ENCODE measurements at regions of chr4 and their contacts with region 1.

Region 1: GRCh38 chr4:56907489-56908205 is at the start of gene REST:
- DNase-seq: peak; percentile 52
- ATAC-seq: peak; percentile 75
- H3K4me3 ChIP-seq: peak within 1 kb of the TSS; percentile 76
- H3K27ac ChIP-seq: peak within 1 kb of the TSS; percentile 96
- H3K4me1 ChIP-seq: peaks cover 7% of the 10 kb centered on the region; the same call in 1 of the 2 replicates
- H3K27me3 ChIP-seq: peaks cover 9% of the 10 kb centered on the region
- CTCF ChIP-seq: no peak
- POLR2A ChIP-seq: no peak
- RAD21 ChIP-seq: no peak
- total RNA-seq, gene REST: 60.5 and 66.9 TPM in 2 replicates

Region 2: GRCh38 chr4:55409468-55410171 is 1498.0 kb before region 1 on chr4:
- CTCF ChIA-PET with region 1: no interaction called
- POLR2A ChIA-PET with region 1: no interaction called
- dilution Hi-C with region 1: no loop called
- in situ Hi-C with region 1: no loop called
- intact Hi-C with region 1: no loop called
- DNase-seq: peak; percentile 13
- ATAC-seq: peak; percentile 40; the same call in 1 of the 2 replicates
- H3K4me3 ChIP-seq: no peak overlapping the region
- H3K27ac ChIP-seq: peak overlapping the region; percentile 9; the same call in 1 of the 2 replicates
- H3K4me1 ChIP-seq: peaks cover 8% of the 10 kb centered on the region
- H3K27me3 ChIP-seq: no peaks in the 10 kb centered on the region
- CTCF ChIP-seq: peak; percentile 33; the same call in 1 of the 2 replicates
- POLR2A ChIP-seq: no peak
- RAD21 ChIP-seq: peak; percentile 43; the same call in 1 of the 2 replicates

Region 3: DNA sequence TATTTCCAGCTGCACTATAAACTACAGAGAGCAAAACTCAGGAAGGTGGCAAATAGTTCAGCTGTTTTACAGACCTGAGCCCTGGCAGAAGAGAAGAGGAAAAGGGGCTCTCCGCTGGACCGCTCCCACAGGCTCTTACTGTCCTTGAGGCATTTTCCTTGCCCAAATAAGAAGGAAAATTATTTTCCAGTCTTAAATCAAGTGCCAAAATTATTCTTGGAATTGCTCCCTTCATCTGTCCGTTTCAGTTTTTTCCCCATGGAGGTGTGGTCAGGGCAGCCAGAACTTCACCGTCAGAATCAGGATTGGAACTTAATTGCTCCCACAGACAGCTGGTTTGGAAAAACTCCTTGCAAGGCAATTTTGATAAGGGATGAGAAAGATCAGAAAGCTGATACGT is 51.0 kb before region 1 on chr4:
- CTCF ChIA-PET with region 1: no interaction called
- POLR2A ChIA-PET with region 1: interaction called, 13 read pairs
- dilution Hi-C with region 1: no loop called
- in situ Hi-C with region 1: no loop called
- intact Hi-C with region 1: no loop called
- DNase-seq: no peak
- ATAC-seq: no peak
- H3K4me3 ChIP-seq: no peak overlapping the region
- H3K27ac ChIP-seq: no peak overlapping the region
- H3K4me1 ChIP-seq: no peaks in the 10 kb centered on the region
- H3K27me3 ChIP-seq: peaks cover 6% of the 10 kb centered on the region
- CTCF ChIP-seq: no peak
- POLR2A ChIP-seq: no peak
- RAD21 ChIP-seq: no peak

Region 4: GRCh38 chr4:56940971-56941370 is 33.3 kb after region 1 on chr4:
- CTCF ChIA-PET with region 1: no interaction called
- POLR2A ChIA-PET with region 1: no interaction called
- dilution Hi-C with region 1: no loop called
- in situ Hi-C with region 1: no loop called
- intact Hi-C with region 1: no loop called
- DNase-seq: no peak
- ATAC-seq: no peak
- H3K4me3 ChIP-seq: no peak overlapping the region
- H3K27ac ChIP-seq: no peak overlapping the region
- H3K4me1 ChIP-seq: peaks cover 2% of the 10 kb centered on the region; the same call in 1 of the 2 replicates
- H3K27me3 ChIP-seq: no peaks in the 10 kb centered on the region
- CTCF ChIP-seq: no peak
- POLR2A ChIP-seq: no peak
- RAD21 ChIP-seq: no peak

Region 5: GRCh38 chr4:56958111-56958517 is 50.5 kb after region 1 on chr4:
- CTCF ChIA-PET with region 1: no interaction called
- POLR2A ChIA-PET with region 1: no interaction called
- dilution Hi-C with region 1: no loop called
- in situ Hi-C with region 1: no loop called
- intact Hi-C with region 1: loop called (anchors 2 kb)
- DNase-seq: peak; percentile 100
- ATAC-seq: peak; percentile 95
- H3K4me3 ChIP-seq: no peak overlapping the region
- H3K27ac ChIP-seq: no peak overlapping the region
- H3K4me1 ChIP-seq: 0 out of 2 replicates have a peak, but pooled peaks cover 2% of the 10 kb centered on the region
- H3K27me3 ChIP-seq: no peaks in the 10 kb centered on the region
- CTCF ChIP-seq: no peak
- POLR2A ChIP-seq: 0 out of 2 replicates have a peak, but pooled peaks have one; percentile 17
- RAD21 ChIP-seq: no peak

Region 6: DNA sequence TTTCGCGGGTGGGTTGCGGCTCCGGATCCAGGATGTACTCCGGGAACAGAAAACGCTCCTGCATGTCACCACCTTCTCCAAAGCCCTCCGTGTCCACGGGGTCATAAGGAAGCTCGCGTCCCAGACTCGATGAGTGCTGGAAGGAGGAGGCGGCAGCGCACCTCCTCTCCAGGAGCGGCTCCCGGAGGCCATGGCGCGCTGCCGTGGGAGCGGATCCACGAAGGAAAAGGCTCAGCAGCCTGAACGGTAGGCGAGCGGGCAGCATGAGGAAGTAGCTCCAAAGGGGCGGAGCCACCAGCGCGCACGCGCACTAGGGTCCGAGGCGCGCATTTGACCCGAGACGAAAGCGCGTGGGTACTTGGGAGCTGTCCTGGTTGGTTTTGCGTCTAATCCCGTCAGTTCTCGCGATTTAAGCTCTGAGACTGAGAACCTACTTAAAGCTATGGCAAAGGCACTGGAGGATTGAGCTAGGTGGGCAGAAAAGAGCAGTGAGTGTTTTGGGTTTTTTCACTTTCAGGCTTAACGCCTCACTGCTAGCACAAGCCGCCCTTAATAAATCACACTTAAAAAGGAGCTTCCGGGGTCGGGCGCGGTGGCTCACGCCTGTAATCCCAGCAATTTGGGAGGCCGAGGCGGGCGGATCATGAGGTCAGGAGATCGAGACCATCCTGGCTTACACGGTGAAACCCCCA is 69.8 kb after region 1 on chr4 and contains the start of gene NOA1:
- CTCF ChIA-PET with region 1: no interaction called
- POLR2A ChIA-PET with region 1: no interaction called
- dilution Hi-C with region 1: no loop called
- in situ Hi-C with region 1: no loop called
- intact Hi-C with region 1: loop called (anchors 2 kb)
- DNase-seq: peak; percentile 99
- ATAC-seq: peak; percentile 71
- H3K4me3 ChIP-seq: peak within 1 kb of the TSS; percentile 86
- H3K27ac ChIP-seq: peak within 1 kb of the TSS; percentile 89
- H3K4me1 ChIP-seq: no peaks in the 10 kb centered on the region
- H3K27me3 ChIP-seq: no peaks in the 10 kb centered on the region
- CTCF ChIP-seq: no peak
- POLR2A ChIP-seq: peak; percentile 59; the same call in 1 of the 2 replicates
- RAD21 ChIP-seq: no peak
- total RNA-seq, gene NOA1: 9.7 and 10.4 TPM in 2 replicates

Region 7: DNA sequence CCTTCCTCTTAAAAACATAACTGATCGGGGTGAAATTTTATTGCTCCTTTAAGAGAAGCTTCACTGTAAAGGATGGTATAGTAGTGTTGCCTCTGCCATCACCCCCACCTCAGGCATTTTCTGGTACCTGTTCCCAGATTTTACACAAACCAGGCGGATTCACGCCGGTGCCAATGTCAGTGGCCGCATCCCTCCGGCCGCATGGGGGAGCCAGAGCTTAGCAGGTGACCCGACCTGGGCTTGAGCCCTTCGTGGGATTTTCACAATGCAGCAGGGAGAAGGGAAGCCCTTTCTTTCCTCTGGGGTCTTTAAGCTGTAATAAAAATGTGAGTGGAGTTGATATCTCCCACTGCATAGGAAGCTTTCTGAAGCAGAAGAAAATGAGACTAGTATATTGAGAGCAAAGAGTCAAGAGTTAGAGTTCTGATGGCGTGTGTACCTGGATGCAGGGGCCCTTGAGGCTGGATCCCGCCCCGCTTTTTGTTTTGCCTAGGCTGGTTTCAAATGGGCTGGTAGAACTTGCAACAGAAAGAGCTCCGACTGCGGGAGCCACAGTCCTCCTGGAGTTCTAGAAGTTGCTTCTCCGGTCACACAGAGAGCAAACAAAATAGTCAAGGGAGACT is 130.4 kb after region 1 on chr4:
- CTCF ChIA-PET with region 1: no interaction called
- POLR2A ChIA-PET with region 1: no interaction called
- dilution Hi-C with region 1: no loop called
- in situ Hi-C with region 1: no loop called
- intact Hi-C with region 1: no loop called
- DNase-seq: peak; percentile 55
- ATAC-seq: peak; percentile 73
- H3K4me3 ChIP-seq: no peak overlapping the region
- H3K27ac ChIP-seq: no peak overlapping the region
- H3K4me1 ChIP-seq: peaks cover 8% of the 10 kb centered on the region
- H3K27me3 ChIP-seq: no peaks in the 10 kb centered on the region
- CTCF ChIP-seq: peak; percentile 86
- POLR2A ChIP-seq: peak; percentile 22; the same call in 1 of the 2 replicates
- RAD21 ChIP-seq: peak; percentile 94

Measured in IMR-90 (cell line).